ENCODE measurements at regions of chr5 and their contacts with region 1.

Region 1: GRCh38 chr5:82165740-82166530 is 112.2 kb downstream of the RPS23 start:
- DNase-seq: peak; percentile 76
- H3K4me3 ChIP-seq: no peak overlapping the region
- H3K27ac ChIP-seq: no peak overlapping the region
- H3K4me1 ChIP-seq: no peaks in the 10 kb centered on the region
- CTCF ChIP-seq: peak; percentile 87

Region 2: DNA sequence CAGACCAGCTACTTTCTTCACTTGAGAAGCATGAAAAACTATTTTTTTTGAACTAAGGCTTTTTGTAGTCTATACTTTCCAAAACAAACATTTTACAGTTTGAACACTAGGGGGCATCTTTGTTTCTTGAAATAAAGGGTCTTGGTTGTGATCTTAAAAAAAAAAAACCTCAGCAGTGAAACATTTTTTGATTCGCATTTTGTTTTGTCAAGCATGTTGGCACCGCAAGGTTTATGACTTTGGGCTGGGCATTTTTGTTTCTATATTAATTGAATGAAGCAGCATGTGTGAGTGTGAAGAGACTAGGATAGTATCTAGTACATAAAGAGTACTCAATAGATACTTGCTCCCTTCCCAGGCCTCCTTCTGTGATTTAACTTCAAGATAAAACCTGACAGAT is 740.4 kb before region 1 on chr5:
- CTCF ChIA-PET with region 1: interaction called, 4 read pairs
- POLR2A ChIA-PET with region 1: no interaction called
- intact Hi-C with region 1: loop called (anchors 5 kb)
- DNase-seq: peak; percentile 75
- H3K4me3 ChIP-seq: no peak overlapping the region
- H3K27ac ChIP-seq: peak overlapping the region; percentile 24
- H3K4me1 ChIP-seq: peaks cover 13% of the 10 kb centered on the region
- CTCF ChIP-seq: peak; percentile 91

Region 3: GRCh38 chr5:81506900-81507588 is 658.9 kb before region 1 on chr5:
- CTCF ChIA-PET with region 1: no interaction called
- POLR2A ChIA-PET with region 1: interaction called, 4 read pairs
- intact Hi-C with region 1: loop called (anchors 2 kb)
- DNase-seq: peak; percentile 92
- H3K4me3 ChIP-seq: no peak overlapping the region
- H3K27ac ChIP-seq: peak overlapping the region; percentile 40
- H3K4me1 ChIP-seq: peaks cover 37% of the 10 kb centered on the region
- CTCF ChIP-seq: peak; percentile 96

Region 4: DNA sequence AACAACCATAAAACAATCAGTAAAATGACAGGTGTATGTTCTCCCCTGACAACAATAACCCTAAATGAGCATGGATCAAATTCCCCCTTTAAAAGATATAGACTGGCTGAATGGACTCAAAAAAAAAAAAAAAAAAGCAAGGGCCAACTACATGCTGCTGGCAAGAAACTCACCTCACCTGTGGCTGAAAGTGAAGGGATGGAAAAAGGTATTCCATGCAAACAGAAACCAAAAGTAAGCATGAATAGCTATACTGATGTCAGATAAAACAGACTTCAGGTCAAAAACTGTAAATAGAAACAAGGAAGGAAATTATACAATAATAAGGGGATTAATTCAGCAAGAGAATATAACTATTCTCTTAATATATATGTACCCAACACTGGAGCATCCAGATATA is 360.8 kb before region 1 on chr5:
- CTCF ChIA-PET with region 1: no interaction called
- POLR2A ChIA-PET with region 1: no interaction called
- intact Hi-C with region 1: no loop called
- DNase-seq: no peak
- H3K4me3 ChIP-seq: no peak overlapping the region
- H3K27ac ChIP-seq: no peak overlapping the region
- H3K4me1 ChIP-seq: no peaks in the 10 kb centered on the region
- CTCF ChIP-seq: no peak

Region 5: DNA sequence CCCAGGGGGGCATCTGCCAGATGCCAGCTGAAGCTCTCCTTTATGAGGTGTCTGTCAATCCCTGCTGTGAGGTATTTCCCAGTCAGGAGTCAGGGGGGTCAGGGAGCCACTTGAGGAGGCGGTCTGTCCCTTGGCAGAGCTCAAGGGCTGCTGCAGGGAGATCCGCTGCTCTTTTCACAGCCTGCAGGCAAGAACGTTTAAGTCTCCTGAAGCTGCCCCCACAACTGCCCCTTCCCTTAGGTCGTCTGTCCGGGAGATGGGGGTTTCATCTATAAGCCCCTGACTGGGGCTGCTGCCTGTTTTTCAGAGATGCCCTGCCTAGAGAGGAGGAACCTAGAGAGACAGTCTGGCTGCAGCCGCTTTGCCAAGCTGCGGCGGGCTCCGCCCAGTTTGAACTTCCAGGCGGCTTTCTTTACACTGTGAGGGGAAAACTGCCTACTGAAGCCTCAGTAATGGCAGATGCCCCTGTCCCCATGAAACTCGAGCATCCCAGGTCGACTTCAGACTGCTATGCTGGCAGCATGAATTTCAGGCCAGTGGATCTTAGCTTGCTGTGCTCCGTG is 36.1 kb before region 1 on chr5:
- CTCF ChIA-PET with region 1: no interaction called
- POLR2A ChIA-PET with region 1: no interaction called
- intact Hi-C with region 1: no loop called
- DNase-seq: no peak
- H3K4me3 ChIP-seq: no peak overlapping the region
- H3K27ac ChIP-seq: no peak overlapping the region
- H3K4me1 ChIP-seq: no peaks in the 10 kb centered on the region
- CTCF ChIP-seq: no peak

Measured in OCI-LY7 (cell line).